ENCODE measurements at regions of chr7 and their contacts with region 1.

Region 1: GRCh38 chr7:136293272-136293671 is 316.1 kb upstream of the MTPN start:
- DNase-seq: peak; percentile 85
- H3K4me3 ChIP-seq: peak overlapping the region; percentile 51
- H3K27ac ChIP-seq: peak overlapping the region; percentile 89
- H3K4me1 ChIP-seq: peaks cover 53% of the 10 kb centered on the region
- CTCF ChIP-seq: no peak

Region 2: GRCh38 chr7:135801045-135801693 is 492.1 kb before region 1 on chr7:
- CTCF ChIA-PET with region 1: no interaction called
- POLR2A ChIA-PET with region 1: no interaction called
- intact Hi-C with region 1: loop called (anchors 5 kb)
- DNase-seq: peak; percentile 81
- H3K4me3 ChIP-seq: no peak overlapping the region
- H3K27ac ChIP-seq: no peak overlapping the region
- H3K4me1 ChIP-seq: peaks cover 7% of the 10 kb centered on the region
- CTCF ChIP-seq: peak; percentile 96

Region 3: GRCh38 chr7:135970682-135971365 is 322.4 kb before region 1 on chr7:
- CTCF ChIA-PET with region 1: no interaction called
- POLR2A ChIA-PET with region 1: no interaction called
- intact Hi-C with region 1: loop called (anchors 5 kb)
- DNase-seq: peak; percentile 80
- H3K4me3 ChIP-seq: peak overlapping the region; percentile 97
- H3K27ac ChIP-seq: peak overlapping the region; percentile 93
- H3K4me1 ChIP-seq: peaks cover 79% of the 10 kb centered on the region
- CTCF ChIP-seq: no peak

Region 4: GRCh38 chr7:136359333-136359903 is 66.1 kb after region 1 on chr7:
- CTCF ChIA-PET with region 1: no interaction called
- POLR2A ChIA-PET with region 1: interaction called, 3 read pairs
- intact Hi-C with region 1: loop called (anchors 1 kb)
- DNase-seq: peak; percentile 95
- H3K4me3 ChIP-seq: peak overlapping the region; percentile 49
- H3K27ac ChIP-seq: peak overlapping the region; percentile 100
- H3K4me1 ChIP-seq: peaks cover 79% of the 10 kb centered on the region
- CTCF ChIP-seq: 0 out of 2 replicates have a peak, but pooled peaks have one; percentile 25

Region 5: DNA sequence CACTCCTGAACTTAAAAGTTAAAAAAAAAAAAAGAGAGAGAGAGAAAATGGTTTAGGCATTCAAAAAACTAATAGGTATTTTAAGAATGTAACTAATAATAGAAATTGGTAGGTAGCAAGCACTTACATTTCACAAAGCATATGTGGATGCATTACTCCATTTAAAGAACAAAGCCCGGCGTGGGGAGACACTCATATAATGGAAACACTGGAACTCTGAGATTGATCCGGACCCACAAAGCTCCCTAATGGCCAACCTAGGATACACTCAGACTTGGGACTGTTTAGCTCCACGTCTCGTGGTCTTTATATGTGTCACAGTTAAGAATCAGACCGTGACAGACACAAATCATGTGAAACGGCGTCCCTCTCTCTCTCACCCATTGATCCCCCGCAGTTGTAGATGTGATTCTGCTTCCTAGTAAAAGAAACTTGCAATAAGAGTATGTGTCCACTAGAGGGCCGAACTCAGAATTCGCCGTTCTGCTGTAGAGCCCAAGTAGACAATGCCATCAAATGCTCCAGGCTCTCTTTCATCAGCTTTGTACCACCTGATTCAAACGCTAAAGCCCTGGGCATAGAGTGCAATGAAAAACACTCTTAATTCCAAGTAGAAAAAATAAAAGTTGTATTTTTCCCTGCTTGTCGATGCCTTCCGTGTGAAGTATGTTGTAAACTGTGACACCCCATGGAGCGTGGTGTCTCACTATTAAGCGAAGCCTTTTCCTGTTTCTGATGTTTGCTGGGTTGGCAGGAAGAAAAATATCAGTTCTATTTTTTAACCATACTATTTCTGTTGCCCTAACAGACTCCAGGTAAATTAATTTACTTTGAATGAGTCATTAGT is 112.9 kb after region 1 on chr7:
- CTCF ChIA-PET with region 1: interaction called, 4 read pairs
- POLR2A ChIA-PET with region 1: no interaction called
- intact Hi-C with region 1: loop called (anchors 1 kb)
- DNase-seq: peak; percentile 82
- H3K4me3 ChIP-seq: no peak overlapping the region
- H3K27ac ChIP-seq: no peak overlapping the region
- H3K4me1 ChIP-seq: peaks cover 30% of the 10 kb centered on the region
- CTCF ChIP-seq: peak; percentile 87

Region 6: GRCh38 chr7:136687693-136688322 is 394.5 kb after region 1 on chr7:
- CTCF ChIA-PET with region 1: no interaction called
- POLR2A ChIA-PET with region 1: no interaction called
- intact Hi-C with region 1: loop called (anchors 5 kb)
- DNase-seq: peak; percentile 58
- H3K4me3 ChIP-seq: no peak overlapping the region
- H3K27ac ChIP-seq: no peak overlapping the region
- H3K4me1 ChIP-seq: peaks cover 7% of the 10 kb centered on the region
- CTCF ChIP-seq: peak; percentile 88